ENCODE measurements at regions of chr1 and their contacts with region 1.

Region 1: DNA sequence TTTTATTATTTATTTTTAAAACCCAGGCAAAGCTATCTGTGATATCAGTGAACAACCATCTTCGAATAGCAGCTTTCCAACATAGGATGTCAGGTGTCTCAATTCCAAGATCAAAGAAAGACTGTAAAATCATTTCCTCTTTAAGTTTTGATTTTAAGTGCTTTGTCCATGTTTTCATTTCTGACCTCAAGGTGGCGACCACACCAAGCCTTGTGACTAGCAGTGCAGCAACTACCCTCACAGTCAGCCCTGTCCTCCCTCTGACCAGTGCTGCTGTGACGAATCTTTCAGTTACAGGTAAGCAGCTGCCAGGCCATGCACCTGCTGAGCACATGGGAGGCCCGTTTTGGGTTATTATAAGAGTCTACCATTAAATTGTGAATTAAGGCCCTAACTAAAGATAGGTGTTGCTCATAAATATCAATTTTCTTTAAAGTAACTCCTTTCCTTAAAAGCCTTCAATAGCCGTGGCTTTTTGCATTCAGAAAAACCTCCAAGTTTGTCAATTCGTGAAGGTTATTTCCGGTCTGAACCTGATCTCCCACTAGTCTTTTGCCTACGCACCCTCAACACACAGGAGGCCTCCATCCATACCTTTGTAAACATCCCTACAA is 117.0 kb downstream of the CD247 start:
- DNase-seq: peak; percentile 55
- ATAC-seq: peak; percentile 83
- H3K4me3 ChIP-seq: no peak overlapping the region
- H3K27ac ChIP-seq: no peak overlapping the region
- H3K4me1 ChIP-seq: no peaks in the 10 kb centered on the region
- H3K27me3 ChIP-seq: no peaks in the 10 kb centered on the region
- CTCF ChIP-seq: peak; percentile 55
- POLR2A ChIP-seq: no peak
- RAD21 ChIP-seq: peak; percentile 60

Region 2: GRCh38 chr1:167238713-167239112 is 162.7 kb before region 1 on chr1:
- CTCF ChIA-PET with region 1: no interaction called
- POLR2A ChIA-PET with region 1: interaction called, 15 read pairs
- dilution Hi-C with region 1: no loop called
- in situ Hi-C with region 1: no loop called
- intact Hi-C with region 1: no loop called
- DNase-seq: no peak
- ATAC-seq: no peak
- H3K4me3 ChIP-seq: no peak overlapping the region
- H3K27ac ChIP-seq: no peak overlapping the region
- H3K4me1 ChIP-seq: no peaks in the 10 kb centered on the region
- H3K27me3 ChIP-seq: no peaks in the 10 kb centered on the region
- CTCF ChIP-seq: no peak
- POLR2A ChIP-seq: no peak
- RAD21 ChIP-seq: no peak

Region 3: DNA sequence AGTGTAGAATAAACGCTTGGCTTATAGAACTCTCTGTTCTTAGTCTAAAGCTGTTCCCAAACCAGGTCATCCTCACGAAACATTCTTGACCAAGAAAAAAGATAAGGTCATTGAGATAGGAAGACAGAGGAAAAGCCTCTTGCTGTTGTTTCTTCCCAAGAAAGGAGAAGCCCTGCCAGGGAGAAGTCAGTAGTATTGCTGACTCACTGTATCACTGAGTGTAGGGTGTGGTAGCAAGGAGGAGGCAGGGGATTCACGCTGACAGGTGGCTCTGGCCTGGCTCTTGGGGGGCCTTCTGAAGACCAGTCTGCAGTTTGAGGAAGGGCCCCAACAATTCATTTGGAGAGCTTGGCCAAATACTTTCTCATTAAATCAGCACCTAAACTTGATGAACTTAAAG is 19.1 kb after region 1 on chr1:
- CTCF ChIA-PET with region 1: interaction called, 10 read pairs
- POLR2A ChIA-PET with region 1: interaction called, 21 read pairs
- dilution Hi-C with region 1: no loop called
- in situ Hi-C with region 1: no loop called
- intact Hi-C with region 1: no loop called
- DNase-seq: no peak
- ATAC-seq: peak; percentile 46; the same call in 1 of the 2 replicates
- H3K4me3 ChIP-seq: no peak overlapping the region
- H3K27ac ChIP-seq: no peak overlapping the region
- H3K4me1 ChIP-seq: no peaks in the 10 kb centered on the region
- H3K27me3 ChIP-seq: no peaks in the 10 kb centered on the region
- CTCF ChIP-seq: no peak
- POLR2A ChIP-seq: no peak
- RAD21 ChIP-seq: no peak

Region 4: DNA sequence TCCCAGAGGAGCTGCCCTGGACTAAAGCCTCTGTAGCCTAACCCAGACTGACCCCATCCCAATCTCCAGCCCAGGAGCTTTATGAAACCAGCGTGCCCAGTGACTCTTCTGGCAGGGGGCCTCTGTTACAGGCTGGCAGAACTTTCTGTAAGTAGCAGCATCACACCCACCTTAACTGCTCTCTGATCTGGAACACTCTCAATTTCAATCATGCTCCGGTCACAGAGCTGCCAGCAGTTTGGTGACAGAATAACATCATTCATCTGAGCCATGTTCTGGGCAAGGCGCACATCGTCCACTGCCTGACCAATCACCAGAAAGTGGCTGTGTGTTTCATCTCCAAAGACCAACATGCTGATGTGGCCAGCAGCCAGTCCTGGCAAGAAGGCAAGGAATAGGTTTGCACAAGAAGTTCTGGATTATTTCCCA is 497.9 kb after region 1 on chr1:
- CTCF ChIA-PET with region 1: no interaction called
- POLR2A ChIA-PET with region 1: no interaction called
- dilution Hi-C with region 1: no loop called
- in situ Hi-C with region 1: no loop called
- intact Hi-C with region 1: no loop called
- DNase-seq: peak; percentile 71
- ATAC-seq: peak; percentile 62
- H3K4me3 ChIP-seq: no peak overlapping the region
- H3K27ac ChIP-seq: no peak overlapping the region
- H3K4me1 ChIP-seq: peaks cover 6% of the 10 kb centered on the region
- H3K27me3 ChIP-seq: no peaks in the 10 kb centered on the region
- CTCF ChIP-seq: no peak
- POLR2A ChIP-seq: no peak
- RAD21 ChIP-seq: no peak